Breast epithelium (tissue), 4 donors: ENCODE measurements at regions of chr1 and their contacts with region 1.

Region 1: GRCh38 chr1:175307160-175307559 is 114.6 kb upstream of the KIAA0040 start:
- DNase-seq: no peak
- H3K4me3 ChIP-seq: no peak overlapping the region
- H3K27ac ChIP-seq: no peak overlapping the region
- H3K4me1 ChIP-seq: no peaks in the 10 kb centered on the region
- H3K27me3 ChIP-seq: no peaks in the 10 kb centered on the region
- CTCF ChIP-seq: no peak
- POLR2A ChIP-seq: no peak

Region 2: DNA sequence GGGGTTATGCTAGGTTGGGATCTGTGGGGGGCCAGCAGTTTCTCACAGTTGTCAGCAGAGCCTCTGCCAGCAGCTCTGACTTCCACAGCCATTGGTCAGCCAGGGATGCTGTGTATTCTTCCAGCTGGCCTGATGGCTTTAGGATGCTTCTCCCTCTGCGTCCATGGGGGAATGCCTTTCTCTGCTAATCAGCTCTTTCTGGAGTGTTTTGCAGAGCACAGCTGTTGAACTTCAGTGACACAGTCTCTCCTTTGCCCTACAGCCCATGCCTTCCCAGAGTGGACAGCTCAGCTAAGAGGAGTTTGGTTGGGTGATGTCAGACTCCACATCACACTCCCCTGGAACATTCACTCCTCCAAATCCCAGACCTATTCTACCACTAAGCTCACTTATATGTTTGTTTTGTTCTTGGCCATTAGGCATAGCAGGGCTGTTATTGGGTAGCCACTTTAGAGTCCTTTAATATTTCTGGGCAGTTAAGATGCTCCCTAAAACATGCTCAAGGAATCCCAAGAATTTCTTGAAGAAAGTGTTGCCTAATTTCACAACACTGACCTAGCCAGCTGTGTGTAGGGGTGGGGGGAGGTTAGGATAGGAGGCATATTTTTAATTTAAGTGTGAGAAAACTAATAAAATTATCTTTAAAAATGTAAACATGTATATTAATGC is 39.3 kb before region 1 on chr1:
- intact Hi-C with region 1: no loop called
- DNase-seq: no peak
- H3K4me3 ChIP-seq: no peak overlapping the region
- H3K27ac ChIP-seq: peak overlapping the region; percentile 52 to 54
- H3K4me1 ChIP-seq: no peaks in the 10 kb centered on the region
- H3K27me3 ChIP-seq: no peaks in the 10 kb centered on the region
- CTCF ChIP-seq: no peak
- POLR2A ChIP-seq: no peak

Region 3: GRCh38 chr1:175331891-175332290 is 24.7 kb after region 1 on chr1:
- intact Hi-C with region 1: no loop called
- DNase-seq: no peak
- H3K4me3 ChIP-seq: no peak overlapping the region
- H3K27ac ChIP-seq: no peak overlapping the region
- H3K4me1 ChIP-seq: no peaks in the 10 kb centered on the region
- H3K27me3 ChIP-seq: no peaks in the 10 kb centered on the region
- CTCF ChIP-seq: no peak
- POLR2A ChIP-seq: no peak

Region 4: DNA sequence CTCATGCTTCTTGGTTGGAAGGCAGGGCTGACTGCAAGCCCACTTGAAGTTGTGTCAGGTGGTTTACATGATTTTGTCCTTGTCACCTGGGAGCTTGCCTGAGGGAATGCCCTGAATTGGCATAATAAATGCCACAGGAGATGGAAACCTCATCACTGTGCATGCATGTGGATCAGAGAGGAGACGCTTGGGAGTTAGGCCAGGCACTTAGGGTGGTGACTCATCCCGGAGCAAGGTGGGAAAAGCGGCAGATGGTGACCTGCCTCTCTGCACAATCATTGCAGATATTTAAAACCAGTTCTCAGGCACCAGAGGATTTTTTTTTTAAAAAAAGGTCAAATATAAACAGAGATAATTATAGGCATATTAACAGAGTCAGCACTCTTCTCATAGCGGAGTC is 87.6 kb after region 1 on chr1:
- intact Hi-C with region 1: no loop called
- DNase-seq: no peak
- H3K4me3 ChIP-seq: no peak overlapping the region
- H3K27ac ChIP-seq: no peak overlapping the region
- H3K4me1 ChIP-seq: no peaks in the 10 kb centered on the region
- H3K27me3 ChIP-seq: no peaks in the 10 kb centered on the region
- CTCF ChIP-seq: no peak
- POLR2A ChIP-seq: no peak

Region 5: GRCh38 chr1:176847052-176847451 is 1539.9 kb after region 1 on chr1:
- intact Hi-C with region 1: loop called (anchors 5 kb)
- DNase-seq: no peak
- H3K4me3 ChIP-seq: no peak overlapping the region
- H3K27ac ChIP-seq: no peak overlapping the region
- H3K4me1 ChIP-seq: no peaks in the 10 kb centered on the region
- H3K27me3 ChIP-seq: no peaks in the 10 kb centered on the region
- CTCF ChIP-seq: no peak
- POLR2A ChIP-seq: no peak